Activated CD8-positive, alpha-beta T cell treated with anti-CD3 and anti-CD28 coated beads for 36 hours (primary cell): ENCODE measurements at regions of chr19 and their contacts with region 1.

Region 1: GRCh38 chr19:19488875-19489690 is 26.3 kb downstream of the TSSK6 start:
- DNase-seq: peak; percentile 96
- ATAC-seq: peak; percentile 90
- H3K4me3 Mint-ChIP-seq: peak overlapping the region; percentile 39
- H3K27ac Mint-ChIP-seq: peak overlapping the region; percentile 82
- H3K4me1 Mint-ChIP-seq: peaks cover 64% of the 10 kb centered on the region
- H3K27me3 Mint-ChIP-seq: no peaks in the 10 kb centered on the region
- CTCF ChIP-seq: no peak

Region 2: GRCh38 chr19:19361075-19361594 is 127.9 kb before region 1 on chr19:
- CTCF ChIA-PET with region 1: interaction called, 135 read pairs
- POLR2A ChIA-PET with region 1: interaction called, 3 read pairs
- intact Hi-C with region 1: loop called (anchors 5 kb)
- DNase-seq: peak; percentile 91
- ATAC-seq: peak; percentile 84
- H3K4me3 Mint-ChIP-seq: peak overlapping the region; percentile 8
- H3K27ac Mint-ChIP-seq: peak overlapping the region; percentile 34
- H3K4me1 Mint-ChIP-seq: peaks cover 25% of the 10 kb centered on the region
- H3K27me3 Mint-ChIP-seq: no peaks in the 10 kb centered on the region
- CTCF ChIP-seq: peak; percentile 80

Region 3: DNA sequence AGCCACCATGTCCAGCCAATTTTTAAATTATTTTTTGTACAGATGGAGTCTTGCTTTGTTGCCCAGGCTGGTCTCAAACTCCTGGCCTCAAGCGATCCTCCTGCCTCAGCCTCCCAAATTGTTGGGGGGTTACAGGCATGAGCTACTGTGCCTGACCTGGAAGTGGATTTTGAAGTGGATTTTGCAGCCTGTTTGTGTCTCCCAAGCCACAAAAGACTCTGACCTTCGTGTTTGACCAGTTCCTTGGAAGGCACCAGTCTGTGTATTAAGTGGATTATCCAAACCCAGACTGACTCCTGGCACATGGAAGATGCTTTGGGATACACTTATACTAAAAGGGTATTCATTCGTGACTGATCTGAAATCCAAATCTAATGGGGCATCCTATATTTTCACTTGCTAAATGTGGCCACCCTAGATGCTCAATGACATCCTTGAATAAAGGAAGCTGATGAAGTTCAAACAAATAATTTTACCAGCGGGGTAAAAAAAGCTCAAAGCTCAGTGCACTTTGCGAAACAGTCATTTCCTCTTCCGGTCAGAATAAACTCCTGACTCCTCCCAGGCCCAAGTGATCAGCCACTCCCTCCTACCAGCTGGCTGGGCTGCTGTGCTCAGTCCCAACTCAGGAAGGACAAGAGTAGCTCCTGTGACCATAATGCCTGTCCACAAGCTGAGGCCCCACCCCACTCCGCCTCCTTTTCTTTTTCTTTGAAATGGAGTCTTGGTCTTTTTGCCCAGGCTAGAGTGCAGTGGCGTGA is 116.2 kb before region 1 on chr19:
- CTCF ChIA-PET with region 1: interaction called, 135 read pairs
- POLR2A ChIA-PET with region 1: no interaction called
- intact Hi-C with region 1: loop called (anchors 5 kb)
- DNase-seq: peak; percentile 60
- ATAC-seq: peak; percentile 95
- H3K4me3 Mint-ChIP-seq: peak overlapping the region; percentile 59
- H3K27ac Mint-ChIP-seq: peak overlapping the region; percentile 94
- H3K4me1 Mint-ChIP-seq: peaks cover 7% of the 10 kb centered on the region
- H3K27me3 Mint-ChIP-seq: no peaks in the 10 kb centered on the region
- CTCF ChIP-seq: no peak

Region 4: GRCh38 chr19:19404879-19405860 is 83.9 kb before region 1 on chr19 and contains the start of gene GATAD2A:
- CTCF ChIA-PET with region 1: interaction called, 24 read pairs
- POLR2A ChIA-PET with region 1: interaction called, 10 read pairs
- intact Hi-C with region 1: loop called (anchors 2 kb)
- DNase-seq: peak; percentile 93
- ATAC-seq: peak; percentile 85
- H3K4me3 Mint-ChIP-seq: peak within 1 kb of the TSS; percentile 97
- H3K27ac Mint-ChIP-seq: peak within 1 kb of the TSS; percentile 95
- H3K4me1 Mint-ChIP-seq: peaks cover 64% of the 10 kb centered on the region
- H3K27me3 Mint-ChIP-seq: no peaks in the 10 kb centered on the region
- CTCF ChIP-seq: no peak
- total RNA-seq, gene GATAD2A: 132 to 136 TPM

Region 5: DNA sequence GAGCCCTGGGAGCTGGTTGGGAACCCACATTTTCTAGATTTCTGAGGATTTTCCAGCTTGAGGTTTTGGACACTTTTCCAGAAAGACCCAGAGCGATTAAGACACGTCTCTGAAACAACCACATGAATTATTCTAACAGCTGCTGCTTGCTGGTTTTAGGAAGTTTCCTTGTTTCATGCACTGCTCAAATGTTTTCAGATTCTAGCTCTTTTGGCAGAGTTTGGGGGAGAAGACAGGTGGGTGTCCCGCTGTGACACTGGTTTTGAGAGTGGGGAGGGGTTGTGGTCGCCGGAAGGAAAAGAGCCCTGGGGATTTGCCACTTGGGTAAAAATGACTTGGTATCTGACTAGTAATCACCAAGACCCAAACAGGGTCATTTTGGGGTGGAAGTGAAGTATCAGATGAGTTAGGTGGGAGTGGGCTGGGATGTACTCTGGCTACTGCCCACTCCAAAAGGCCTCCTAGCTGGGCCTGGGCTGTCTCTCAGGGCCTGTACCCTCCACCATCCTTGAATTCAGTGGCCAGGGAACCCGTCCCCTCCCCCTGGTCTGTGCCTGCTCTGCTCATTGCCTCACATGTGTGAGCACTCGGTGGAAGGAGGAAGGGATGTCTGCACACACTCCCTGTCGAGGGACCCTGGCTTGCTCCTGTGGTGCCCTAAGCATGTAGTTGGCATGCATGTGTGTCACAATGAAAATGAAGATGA is 70.4 kb before region 1 on chr19:
- CTCF ChIA-PET with region 1: interaction called, 16 read pairs
- POLR2A ChIA-PET with region 1: interaction called, 4 read pairs
- intact Hi-C with region 1: no loop called
- DNase-seq: peak; percentile 41
- ATAC-seq: peak; percentile 19
- H3K4me3 Mint-ChIP-seq: no peak overlapping the region
- H3K27ac Mint-ChIP-seq: peak overlapping the region; percentile 50
- H3K4me1 Mint-ChIP-seq: peaks cover 74% of the 10 kb centered on the region
- H3K27me3 Mint-ChIP-seq: no peaks in the 10 kb centered on the region
- CTCF ChIP-seq: no peak

Region 6: GRCh38 chr19:19459707-19460251 is 29.3 kb before region 1 on chr19:
- CTCF ChIA-PET with region 1: interaction called, 7 read pairs
- POLR2A ChIA-PET with region 1: interaction called, 14 read pairs
- intact Hi-C with region 1: no loop called
- DNase-seq: peak; percentile 89
- ATAC-seq: peak; percentile 67
- H3K4me3 Mint-ChIP-seq: peak overlapping the region; percentile 89
- H3K27ac Mint-ChIP-seq: peak overlapping the region; percentile 100
- H3K4me1 Mint-ChIP-seq: peaks cover 85% of the 10 kb centered on the region
- H3K27me3 Mint-ChIP-seq: no peaks in the 10 kb centered on the region
- CTCF ChIP-seq: no peak

Region 7: GRCh38 chr19:19508217-19508616 is 19.1 kb after region 1 on chr19:
- CTCF ChIA-PET with region 1: interaction called, 11 read pairs
- POLR2A ChIA-PET with region 1: interaction called, 4 read pairs
- intact Hi-C with region 1: no loop called
- DNase-seq: no peak
- ATAC-seq: no peak
- H3K4me3 Mint-ChIP-seq: no peak overlapping the region
- H3K27ac Mint-ChIP-seq: no peak overlapping the region
- H3K4me1 Mint-ChIP-seq: peaks cover 3% of the 10 kb centered on the region
- H3K27me3 Mint-ChIP-seq: no peaks in the 10 kb centered on the region
- CTCF ChIP-seq: no peak

Region 8: GRCh38 chr19:19525611-19526380 is 36.7 kb after region 1 on chr19:
- CTCF ChIA-PET with region 1: no interaction called
- POLR2A ChIA-PET with region 1: no interaction called
- intact Hi-C with region 1: no loop called
- DNase-seq: no peak
- ATAC-seq: no peak
- H3K4me3 Mint-ChIP-seq: no peak overlapping the region
- H3K27ac Mint-ChIP-seq: no peak overlapping the region
- H3K4me1 Mint-ChIP-seq: peaks cover 19% of the 10 kb centered on the region
- H3K27me3 Mint-ChIP-seq: no peaks in the 10 kb centered on the region
- CTCF ChIP-seq: no peak

Region 9: DNA sequence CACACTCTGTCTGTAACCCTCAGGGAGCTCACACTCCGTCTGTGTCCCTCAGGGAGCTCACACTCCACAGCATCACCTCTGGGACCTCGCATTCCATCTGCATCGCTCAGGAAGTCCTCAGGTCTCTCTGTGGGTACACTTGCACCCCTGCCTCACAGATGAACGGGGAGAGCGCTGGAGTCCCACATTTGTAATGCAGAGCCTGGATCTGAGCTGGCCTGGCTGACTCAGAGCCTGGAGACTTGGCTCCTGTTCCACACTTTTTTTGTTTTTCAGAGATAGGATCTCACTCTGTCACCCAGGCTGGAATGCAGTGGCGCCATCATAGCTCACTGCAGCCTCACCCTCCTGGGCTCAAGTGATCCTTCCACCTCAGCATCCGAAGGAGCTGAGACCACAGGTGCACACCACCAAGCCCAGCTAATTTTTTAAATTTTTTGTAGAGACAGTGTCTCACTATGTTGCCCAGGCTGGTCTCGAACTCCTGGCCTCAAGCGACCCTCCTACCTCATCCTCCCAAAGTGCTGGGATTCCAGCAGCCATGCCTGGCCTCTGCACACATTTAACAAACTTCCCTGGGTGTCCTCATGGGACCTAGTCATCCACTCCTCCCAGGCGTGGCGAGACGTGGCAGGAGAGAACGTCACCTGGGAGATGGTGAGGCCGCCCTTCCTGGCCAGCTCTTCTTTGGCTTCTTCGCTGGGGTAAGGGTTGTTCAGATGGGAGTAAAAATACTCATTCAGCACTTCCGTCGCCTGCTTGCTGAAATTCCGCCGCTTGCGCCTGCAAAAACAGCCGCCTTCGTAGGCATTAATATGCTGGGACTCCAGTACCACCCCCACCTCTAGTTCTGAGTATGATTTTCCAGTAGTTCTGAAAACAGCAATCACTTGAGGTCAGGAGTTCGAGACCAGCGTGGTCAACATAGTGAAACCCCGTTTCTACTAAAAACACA is 80.0 kb after region 1 on chr19:
- CTCF ChIA-PET with region 1: no interaction called
- POLR2A ChIA-PET with region 1: no interaction called
- intact Hi-C with region 1: no loop called
- DNase-seq: peak; percentile 15
- ATAC-seq: no peak
- H3K4me3 Mint-ChIP-seq: no peak overlapping the region
- H3K27ac Mint-ChIP-seq: no peak overlapping the region
- H3K4me1 Mint-ChIP-seq: peaks cover 4% of the 10 kb centered on the region
- H3K27me3 Mint-ChIP-seq: no peaks in the 10 kb centered on the region
- CTCF ChIP-seq: no peak